ENCODE measurements at regions of chr16 and their contacts with region 1.

Region 1: GRCh38 chr16:3059000-3059722 is 6.3 kb upstream of the IL32 start:
- DNase-seq: peak; percentile 99
- ATAC-seq: peak; percentile 69
- H3K4me3 Mint-ChIP-seq: peak overlapping the region; percentile 93
- H3K27ac Mint-ChIP-seq: peak overlapping the region; percentile 91
- H3K4me1 Mint-ChIP-seq: peaks cover 57% of the 10 kb centered on the region
- H3K27me3 Mint-ChIP-seq: no peaks in the 10 kb centered on the region

Region 2: GRCh38 chr16:3027945-3028712 is 31.0 kb before region 1 on chr16:
- POLR2A ChIA-PET with region 1: interaction called, 33 read pairs
- DNase-seq: peak; percentile 93
- ATAC-seq: peak; percentile 28
- H3K4me3 Mint-ChIP-seq: peak overlapping the region; percentile 81
- H3K27ac Mint-ChIP-seq: peak overlapping the region; percentile 61
- H3K4me1 Mint-ChIP-seq: peaks cover 27% of the 10 kb centered on the region
- H3K27me3 Mint-ChIP-seq: peaks cover 16% of the 10 kb centered on the region

Region 3: GRCh38 chr16:3045357-3045728 is 13.8 kb before region 1 on chr16:
- POLR2A ChIA-PET with region 1: interaction called, 131 read pairs
- DNase-seq: no peak
- ATAC-seq: peak; percentile 45
- H3K4me3 Mint-ChIP-seq: peak overlapping the region; percentile 77
- H3K27ac Mint-ChIP-seq: peak overlapping the region; percentile 83
- H3K4me1 Mint-ChIP-seq: peaks cover 23% of the 10 kb centered on the region
- H3K27me3 Mint-ChIP-seq: peaks cover 35% of the 10 kb centered on the region

Region 4: GRCh38 chr16:3123986-3124886 is 65.1 kb after region 1 on chr16:
- POLR2A ChIA-PET with region 1: interaction called, 121 read pairs
- DNase-seq: peak; percentile 98
- ATAC-seq: peak; percentile 86
- H3K4me3 Mint-ChIP-seq: peak overlapping the region; percentile 97
- H3K27ac Mint-ChIP-seq: peak overlapping the region; percentile 98
- H3K4me1 Mint-ChIP-seq: peaks cover 28% of the 10 kb centered on the region
- H3K27me3 Mint-ChIP-seq: no peaks in the 10 kb centered on the region

Region 5: DNA sequence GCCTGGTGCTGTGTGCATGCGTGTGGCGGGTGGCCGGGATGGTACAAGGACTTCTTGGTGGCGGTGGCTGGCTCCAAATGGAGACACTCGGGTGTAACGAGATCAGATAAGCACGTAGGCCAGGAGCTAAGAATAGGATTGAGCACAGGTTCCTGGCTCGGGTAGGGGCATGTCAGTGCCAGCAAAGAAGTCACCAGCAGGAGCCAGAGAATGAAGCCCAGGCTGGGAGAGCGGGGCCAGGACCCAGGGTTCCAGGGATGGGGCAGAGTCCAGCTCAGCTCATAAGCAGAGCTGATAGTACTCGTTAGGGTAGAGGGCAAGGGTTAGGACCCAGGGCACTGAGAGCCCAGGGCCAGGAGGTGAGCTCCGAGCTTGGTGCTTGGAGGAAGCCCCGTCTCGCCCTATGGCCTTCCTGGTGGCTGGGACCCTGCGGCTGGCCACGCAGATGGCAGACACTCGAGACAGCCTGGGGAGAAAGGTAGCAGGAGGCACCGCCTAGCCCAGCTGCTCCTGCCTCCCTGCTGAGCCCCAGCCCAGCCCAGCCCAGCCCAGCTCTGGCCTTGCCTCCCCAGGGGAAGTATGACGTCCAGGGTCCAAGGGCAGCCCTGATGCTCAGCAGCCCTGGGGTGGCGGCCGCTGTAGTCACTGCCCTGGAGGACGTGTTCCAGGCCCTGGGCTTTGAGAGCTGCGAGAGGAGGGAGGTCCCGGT is 84.6 kb after region 1 on chr16:
- POLR2A ChIA-PET with region 1: no interaction called
- DNase-seq: no peak
- ATAC-seq: no peak
- H3K4me3 Mint-ChIP-seq: no peak overlapping the region
- H3K27ac Mint-ChIP-seq: no peak overlapping the region
- H3K4me1 Mint-ChIP-seq: no peaks in the 10 kb centered on the region
- H3K27me3 Mint-ChIP-seq: no peaks in the 10 kb centered on the region

Region 6: GRCh38 chr16:3454099-3454498 is 394.9 kb after region 1 on chr16:
- POLR2A ChIA-PET with region 1: no interaction called
- DNase-seq: no peak
- ATAC-seq: no peak
- H3K4me3 Mint-ChIP-seq: no peak overlapping the region
- H3K27ac Mint-ChIP-seq: no peak overlapping the region
- H3K4me1 Mint-ChIP-seq: peaks cover 16% of the 10 kb centered on the region
- H3K27me3 Mint-ChIP-seq: no peaks in the 10 kb centered on the region